ENCODE measurements at regions of chr12 and their contacts with region 1.

Region 1: DNA sequence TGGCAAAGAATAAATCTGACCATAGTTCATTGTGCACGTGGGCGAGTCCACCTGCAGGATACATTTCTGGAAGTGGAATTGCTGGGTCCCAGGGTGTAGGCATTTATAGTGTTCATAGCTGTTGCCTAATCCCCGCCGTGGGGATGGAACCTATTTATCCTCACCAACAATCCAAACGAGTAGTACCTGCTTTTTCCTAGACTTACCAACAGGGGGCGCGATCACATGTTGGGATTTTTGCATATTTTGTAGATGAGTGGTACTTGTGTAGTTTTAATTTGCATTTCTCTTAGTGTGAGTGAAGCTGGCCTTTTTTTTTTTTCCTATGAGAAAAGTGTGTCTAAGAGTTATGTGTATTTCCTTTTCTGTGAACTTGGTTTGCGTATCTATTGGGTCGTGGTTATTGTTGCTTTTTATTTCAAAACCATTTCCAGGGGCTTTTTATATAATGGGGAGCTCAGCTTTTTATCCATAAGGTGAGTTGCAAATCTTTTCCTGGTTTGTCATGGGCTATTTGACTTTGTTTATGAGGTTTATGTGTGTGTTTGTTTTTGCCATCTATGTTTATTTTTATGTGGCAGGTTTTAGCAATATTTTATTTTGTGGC is 67.2 kb downstream of the CCDC92 start:
- DNase-seq: peak in 2 of 3 donors; percentile 35 to 64
- ATAC-seq: peak; percentile 78 to 91 (median 86)
- H3K4me3 ChIP-seq: no peak overlapping the region
- H3K27ac ChIP-seq: no peak overlapping the region
- H3K4me1 ChIP-seq: no peaks in the 10 kb centered on the region
- H3K27me3 ChIP-seq: no peaks in the 10 kb centered on the region
- CTCF ChIP-seq: peak; percentile 76 to 86 (median 82)
- POLR2A ChIP-seq: no peak

Region 2: DNA sequence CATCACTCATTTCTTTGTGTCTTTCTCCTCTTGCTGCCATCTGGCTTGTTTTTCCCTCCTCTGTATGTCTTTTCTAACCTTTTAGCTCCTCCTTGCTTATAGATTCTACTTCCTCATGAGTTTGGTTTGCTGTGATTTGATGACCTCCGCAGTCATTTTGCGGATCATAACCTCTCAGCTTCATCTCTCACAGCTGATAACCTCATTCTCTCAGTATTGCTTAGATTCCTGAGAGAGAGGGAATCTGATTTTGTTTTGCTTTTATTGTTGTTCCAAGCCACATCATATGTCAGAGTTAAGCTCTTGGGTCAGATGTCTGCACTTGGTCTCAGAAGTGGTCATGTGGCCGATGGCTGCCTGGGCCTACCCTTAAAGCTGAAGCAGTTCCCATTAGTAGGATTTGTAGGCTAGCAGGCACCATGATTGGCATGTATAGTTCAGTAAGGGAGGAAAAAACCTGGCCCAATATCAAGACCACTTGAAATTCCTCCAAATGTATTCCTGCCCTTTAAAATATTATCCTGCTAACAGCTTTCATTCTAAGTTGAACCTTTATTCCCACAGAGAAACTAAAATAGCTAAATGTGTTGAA is 81.0 kb after region 1 on chr12:
- intact Hi-C with region 1: loop called in 1 of 2 experiments (anchors 5 kb)
- DNase-seq: no peak
- ATAC-seq: no peak
- H3K4me3 ChIP-seq: no peak overlapping the region
- H3K27ac ChIP-seq: no peak overlapping the region
- H3K4me1 ChIP-seq: peaks cover 0 to 21% (median 4%) of the 10 kb centered on the region in 4 donors
- H3K27me3 ChIP-seq: no peaks in the 10 kb centered on the region
- CTCF ChIP-seq: no peak
- POLR2A ChIP-seq: no peak

Measured in right lobe of liver (tissue), 6 donors.